ENCODE measurements at regions of chr2 and their contacts with region 1.

Region 1: GRCh38 chr2:119223521-119224390 is at the start of gene STEAP3:
- DNase-seq: peak; percentile 90
- total RNA-seq, gene STEAP3: 10.7 TPM

Region 2: GRCh38 chr2:119240311-119241202 is 16.8 kb after region 1 on chr2:
- intact Hi-C with region 1: loop called (anchors 1 kb)
- DNase-seq: peak; percentile 85

Region 3: GRCh38 chr2:119255760-119256581 is 32.2 kb after region 1 on chr2:
- intact Hi-C with region 1: loop called (anchors 5 kb)
- DNase-seq: no peak

Measured in cardiac septum (tissue), 1 donor.